Posterior vena cava (tissue), 2 donors: ENCODE measurements at regions of chr3 and their contacts with region 1.

Region 1: GRCh38 chr3:179653096-179653797 is 407 bp downstream of the USP13 start:
- DNase-seq: peak; percentile 91

Region 2: DNA sequence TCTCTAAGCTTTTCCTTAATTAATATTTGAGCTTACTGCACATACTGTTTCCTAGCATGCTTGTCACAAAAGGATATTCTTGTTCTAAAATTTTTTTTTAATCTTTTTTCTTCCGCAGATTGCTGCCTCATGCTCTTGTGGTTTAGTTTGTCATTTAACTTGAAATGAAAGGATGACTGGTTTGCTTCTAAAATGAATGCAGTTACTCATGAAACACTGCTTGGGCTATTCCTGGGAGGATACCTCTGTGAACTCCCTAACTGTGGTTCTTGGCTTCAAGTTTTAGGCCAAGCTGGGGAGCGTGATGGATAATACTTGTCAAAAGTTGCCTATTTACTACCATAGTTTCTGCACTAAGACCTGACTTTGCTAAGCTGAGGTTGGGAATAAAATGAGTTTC is 63.6 kb after region 1 on chr3:
- intact Hi-C with region 1: loop called in 1 of 2 experiments (anchors 10 kb)
- DNase-seq: no peak